AG04449 (cell line): ENCODE measurements at regions of chr9 and their contacts with region 1.

Region 1: DNA sequence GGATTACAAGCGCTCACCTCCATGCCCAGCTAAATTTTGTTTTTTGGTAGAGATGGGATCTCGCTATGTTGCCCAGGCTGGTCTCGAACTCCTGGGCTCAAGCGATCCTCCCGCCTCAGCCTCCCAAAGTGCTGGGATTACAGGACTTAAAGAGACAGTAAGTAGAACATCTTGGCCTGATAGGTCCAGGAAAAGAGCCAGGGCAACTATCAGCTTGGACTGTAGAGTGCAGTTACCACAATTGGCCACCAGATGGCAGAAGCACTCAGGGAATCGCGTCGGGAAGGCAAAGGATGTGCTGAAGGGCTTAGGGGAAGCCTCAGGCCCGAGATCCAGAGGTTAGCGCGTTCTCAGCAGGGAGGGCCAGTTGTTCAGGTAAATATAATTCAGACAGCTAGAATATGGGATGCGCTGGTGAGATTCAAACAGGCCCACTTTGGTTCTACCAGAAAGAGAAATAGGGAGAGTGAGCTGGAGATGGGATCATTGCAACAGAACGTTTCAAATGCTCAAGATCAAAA is 21.5 kb downstream of the C9orf57 start:
- DNase-seq: no peak
- H3K4me3 ChIP-seq: no peak overlapping the region
- CTCF ChIP-seq: peak; percentile 93

Region 2: DNA sequence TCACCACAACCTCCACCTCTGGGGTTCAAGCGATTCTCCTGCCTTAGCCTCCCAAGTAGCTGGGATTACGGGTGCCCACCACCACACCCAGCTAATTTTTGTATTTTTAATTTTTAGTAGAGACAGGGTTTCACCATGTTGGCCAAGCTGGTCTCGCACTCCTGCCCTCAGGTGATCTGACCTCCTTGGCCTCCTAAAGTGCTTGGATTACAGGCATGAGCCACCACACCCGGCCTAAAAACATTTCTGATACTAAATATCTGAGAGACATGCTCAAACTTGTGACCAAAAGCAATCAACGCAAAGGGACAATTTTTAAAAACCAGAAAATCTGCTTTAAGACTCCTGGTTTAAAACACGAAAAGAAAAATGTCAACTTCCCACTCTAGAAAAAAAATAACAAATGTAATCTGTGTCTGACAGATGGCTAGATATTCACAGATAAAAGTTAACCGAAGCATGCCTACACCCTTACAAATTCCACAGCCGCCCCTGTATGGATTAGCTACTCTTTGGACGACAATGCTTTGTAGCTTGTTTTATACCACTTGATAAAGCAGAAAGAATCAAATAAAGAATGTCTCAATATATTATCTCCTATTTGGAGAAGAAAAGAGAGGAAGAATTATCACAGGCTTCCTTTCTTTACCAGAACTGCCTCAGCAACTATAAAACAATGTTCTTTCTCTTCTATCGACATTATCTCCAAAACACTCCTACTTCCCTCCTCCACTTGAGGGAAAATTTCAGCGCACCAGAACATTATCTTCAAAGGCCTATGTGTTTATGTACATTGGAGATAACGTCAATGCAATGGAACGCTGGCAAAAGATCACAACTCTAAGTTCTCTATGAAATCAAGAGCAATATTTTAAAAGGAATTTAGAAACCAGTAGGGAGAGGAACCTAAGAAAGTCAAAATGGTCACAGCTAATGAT is 297.0 kb before region 1 on chr9:
- CTCF ChIA-PET with region 1: no interaction called
- POLR2A ChIA-PET with region 1: no interaction called
- DNase-seq: no peak
- H3K4me3 ChIP-seq: no peak overlapping the region
- CTCF ChIP-seq: no peak

Region 3: GRCh38 chr9:72060513-72060912 is 21.6 kb after region 1 on chr9 and contains the start of gene C9orf57:
- CTCF ChIA-PET with region 1: no interaction called
- POLR2A ChIA-PET with region 1: no interaction called
- DNase-seq: no peak
- H3K4me3 ChIP-seq: no peak within 1 kb of the TSS
- CTCF ChIP-seq: no peak

Region 4: DNA sequence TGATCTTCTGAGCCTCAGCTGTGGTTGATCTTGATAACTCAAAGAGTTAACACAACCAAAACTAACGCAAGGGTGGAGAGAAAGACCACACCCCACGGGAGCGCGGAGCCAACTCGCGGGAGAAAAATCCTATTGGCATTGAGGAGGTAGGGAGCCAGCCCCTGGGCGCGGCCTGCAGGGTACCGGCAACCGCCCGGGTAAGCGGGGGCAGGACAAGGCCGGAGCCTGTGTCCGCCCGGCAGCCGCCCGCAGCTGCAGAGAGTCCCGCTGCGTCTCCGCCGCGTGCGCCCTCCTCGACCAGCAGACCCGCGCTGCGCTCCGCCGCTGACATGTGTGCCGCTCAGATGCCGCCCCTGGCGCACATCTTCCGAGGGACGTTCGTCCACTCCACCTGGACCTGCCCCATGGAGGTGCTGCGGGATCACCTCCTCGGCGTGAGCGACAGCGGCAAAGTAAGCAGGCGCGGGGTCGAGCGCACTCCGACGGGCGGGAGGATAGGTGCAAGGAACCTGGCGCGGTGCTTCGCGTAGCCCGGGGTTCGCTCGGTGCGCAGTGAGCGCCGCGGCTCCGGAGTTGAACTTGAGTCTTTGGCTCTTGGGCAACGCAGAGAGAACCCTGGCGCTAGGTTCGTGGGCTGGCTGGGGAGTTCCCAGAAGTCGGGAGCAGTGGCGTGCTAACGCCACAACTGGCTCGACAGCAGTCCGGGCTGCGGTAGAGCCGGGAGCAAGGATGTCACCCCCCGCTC is 110.5 kb after region 1 on chr9 and contains the start of gene GDA:
- CTCF ChIA-PET with region 1: no interaction called
- POLR2A ChIA-PET with region 1: no interaction called
- DNase-seq: no peak
- H3K4me3 ChIP-seq: no peak within 1 kb of the TSS
- CTCF ChIP-seq: no peak

Region 5: DNA sequence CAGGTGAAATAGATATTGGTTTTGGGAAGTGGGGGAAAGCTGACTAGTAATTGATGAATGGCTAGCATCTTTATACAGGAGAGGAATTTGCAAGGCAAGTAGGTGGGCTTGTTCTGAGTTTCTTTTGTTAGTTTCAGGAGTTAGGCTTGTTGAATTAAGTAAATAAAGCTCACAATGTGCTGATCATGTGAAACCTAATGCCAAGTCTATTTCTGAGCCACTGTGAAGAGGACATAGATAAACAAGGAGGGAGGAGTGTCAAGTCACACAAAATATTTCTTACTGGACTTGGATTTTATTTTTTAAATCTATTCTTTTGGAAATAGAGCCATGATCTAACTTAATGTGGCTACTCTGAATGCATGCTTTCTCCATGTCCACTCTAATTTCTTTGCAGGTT is 130.2 kb after region 1 on chr9:
- CTCF ChIA-PET with region 1: no interaction called
- POLR2A ChIA-PET with region 1: no interaction called
- DNase-seq: no peak
- H3K4me3 ChIP-seq: no peak overlapping the region
- CTCF ChIP-seq: no peak

Region 6: DNA sequence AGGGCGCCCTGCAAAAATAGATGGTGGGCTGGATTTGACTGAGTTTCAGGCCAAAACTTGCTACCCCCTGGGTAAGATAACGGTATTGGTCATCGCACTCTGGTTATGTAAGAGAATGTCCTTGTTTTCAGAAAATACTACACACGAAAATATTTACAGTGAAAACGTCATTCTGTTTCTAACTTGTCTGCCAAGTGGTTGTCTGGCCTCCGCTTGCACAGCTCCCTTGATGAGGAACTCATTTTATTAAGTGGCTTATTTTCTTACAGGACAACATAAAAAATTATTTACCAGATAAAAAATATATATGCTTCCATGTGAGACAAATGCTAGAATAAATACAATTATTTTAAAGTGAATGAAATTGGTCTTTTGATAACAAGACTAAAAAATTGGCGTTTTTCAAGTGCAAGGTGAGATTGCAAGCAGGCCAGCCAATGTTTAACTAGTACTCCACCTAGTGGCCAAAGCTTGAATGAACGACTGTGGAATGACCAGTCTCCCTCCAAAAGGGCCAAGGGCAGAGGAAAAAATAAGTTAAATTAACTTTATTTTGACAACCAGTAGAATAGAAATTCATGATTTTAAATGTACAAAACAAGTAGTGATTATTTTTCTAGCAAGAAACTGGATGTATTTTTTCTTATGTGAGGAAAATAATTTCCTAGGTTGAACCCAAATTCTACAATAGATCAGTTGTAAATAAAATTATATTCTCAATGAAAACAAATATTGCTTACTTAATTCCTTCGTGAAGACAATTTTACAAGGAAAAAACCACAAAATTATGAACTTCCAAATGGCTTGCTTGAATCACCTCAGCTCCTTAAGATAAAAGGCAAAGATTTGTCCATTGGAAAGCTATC is 232.9 kb after region 1 on chr9:
- CTCF ChIA-PET with region 1: interaction called, 238 read pairs
- POLR2A ChIA-PET with region 1: no interaction called
- DNase-seq: no peak
- H3K4me3 ChIP-seq: no peak overlapping the region
- CTCF ChIP-seq: peak; percentile 77